Endothelial cell of umbilical vein (primary cell): ENCODE measurements at regions of chr1 and their contacts with region 1.

Region 1: DNA sequence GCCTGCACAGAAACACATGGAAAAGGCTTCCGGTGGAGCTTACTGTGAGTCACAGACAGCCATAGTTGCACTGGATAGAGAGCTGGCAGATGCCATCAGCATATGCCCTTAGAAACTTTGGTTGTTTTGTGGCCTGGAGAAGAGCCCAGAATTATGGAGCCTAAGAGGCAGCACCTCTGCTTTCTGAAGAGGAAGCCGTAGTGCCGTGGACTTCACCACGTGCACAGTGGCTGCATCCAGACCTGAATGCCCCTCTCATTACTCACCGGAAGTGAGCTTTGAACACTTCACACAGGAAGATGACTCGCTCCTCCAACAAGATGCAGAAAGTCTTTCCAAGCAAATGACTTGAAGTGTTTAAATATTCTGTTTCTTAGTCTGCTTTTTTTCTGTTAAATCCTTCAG is 28.4 kb downstream of the JUN start:
- DNase-seq: peak; percentile 99
- H3K4me3 ChIP-seq: peak overlapping the region in 1 of 3 experiments; percentile 18
- H3K27ac ChIP-seq: peak overlapping the region; percentile 96
- H3K4me1 ChIP-seq: peaks cover 40% of the 10 kb centered on the region
- H3K27me3 ChIP-seq: no peaks in the 10 kb centered on the region
- CTCF ChIP-seq: no peak
- POLR2A ChIP-seq: no peak

Region 2: DNA sequence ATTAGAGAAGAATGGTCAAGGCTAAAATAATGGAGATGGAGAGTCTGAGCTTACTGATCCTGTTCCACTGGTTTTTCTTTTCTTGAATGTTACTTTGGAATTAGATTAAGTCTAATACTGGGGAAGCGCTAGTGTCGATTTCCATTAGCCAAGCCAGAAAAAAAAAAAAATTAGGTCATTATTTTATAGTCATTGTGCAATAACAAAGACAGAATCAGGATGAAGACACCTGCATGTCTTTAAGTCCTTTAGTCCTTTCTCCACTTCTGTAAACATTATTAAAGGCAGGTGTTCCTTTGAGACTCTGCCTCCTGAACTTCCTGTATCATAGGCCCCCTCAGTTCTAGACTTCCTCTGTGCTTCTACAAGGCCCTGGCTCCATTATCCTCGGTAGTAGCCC is 98.4 kb before region 1 on chr1:
- CTCF ChIA-PET with region 1: no interaction called
- POLR2A ChIA-PET with region 1: no interaction called
- dilution Hi-C with region 1: no loop called
- intact Hi-C with region 1: no loop called
- DNase-seq: no peak
- H3K4me3 ChIP-seq: no peak overlapping the region
- H3K27ac ChIP-seq: no peak overlapping the region
- H3K4me1 ChIP-seq: no peaks in the 10 kb centered on the region
- H3K27me3 ChIP-seq: no peaks in the 10 kb centered on the region
- CTCF ChIP-seq: no peak
- POLR2A ChIP-seq: no peak

Region 3: DNA sequence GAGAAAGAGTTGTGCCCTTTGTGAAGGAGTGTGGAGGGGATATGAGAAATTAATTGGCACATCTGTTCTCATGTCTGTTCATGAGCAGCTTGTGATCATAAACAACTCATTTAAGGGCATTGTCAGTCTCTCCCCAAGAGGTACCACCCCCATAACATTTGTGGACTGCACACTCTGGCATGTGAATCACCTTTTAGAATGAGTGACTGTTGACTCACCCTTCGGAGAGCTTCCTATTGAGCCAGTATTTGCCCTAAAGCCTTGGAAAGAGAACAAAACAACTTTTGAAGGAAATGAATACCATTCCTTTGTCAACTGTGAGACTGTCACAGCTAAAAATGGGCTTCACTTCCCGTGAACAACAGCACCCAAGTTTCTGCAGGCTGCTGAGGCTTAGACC is 28.1 kb before region 1 on chr1:
- CTCF ChIA-PET with region 1: interaction called, 4 read pairs
- POLR2A ChIA-PET with region 1: interaction called, 3 read pairs
- dilution Hi-C with region 1: no loop called
- intact Hi-C with region 1: loop called (anchors 1 kb)
- DNase-seq: peak; percentile 97
- H3K4me3 ChIP-seq: no peak overlapping the region
- H3K27ac ChIP-seq: peak overlapping the region; percentile 88
- H3K4me1 ChIP-seq: peaks cover 19% of the 10 kb centered on the region
- H3K27me3 ChIP-seq: no peaks in the 10 kb centered on the region
- CTCF ChIP-seq: no peak
- POLR2A ChIP-seq: no peak

Region 4: DNA sequence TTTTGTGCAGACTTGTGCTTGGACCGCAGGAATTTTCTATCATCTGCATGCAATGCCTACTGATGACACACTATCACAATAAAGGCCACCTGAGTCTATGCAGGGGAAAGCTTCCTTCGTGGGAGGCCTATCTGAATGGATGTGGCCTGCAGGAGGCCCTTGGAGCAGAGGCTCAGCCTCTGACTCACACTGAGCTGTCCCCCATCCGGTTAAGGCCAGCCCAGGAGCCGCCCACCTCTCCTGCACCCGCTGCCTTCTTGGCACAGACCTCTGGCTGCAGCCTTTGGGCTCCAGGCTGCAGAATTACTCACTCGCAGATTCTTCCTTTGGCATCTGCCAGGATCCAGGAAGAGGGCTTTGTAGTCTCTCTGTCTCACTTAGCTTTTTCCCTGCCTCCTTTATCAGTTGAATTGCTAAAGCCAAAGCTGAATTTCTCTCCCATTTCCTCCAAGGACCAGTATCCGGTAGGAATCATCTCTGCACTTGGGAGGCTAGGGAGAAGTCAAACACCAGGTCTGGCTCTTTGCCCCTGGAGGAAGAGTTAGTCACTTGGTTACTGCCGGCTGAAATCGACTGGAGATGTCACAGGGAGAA is 93.4 kb after region 1 on chr1:
- CTCF ChIA-PET with region 1: no interaction called
- POLR2A ChIA-PET with region 1: no interaction called
- dilution Hi-C with region 1: no loop called
- intact Hi-C with region 1: loop called (anchors 1 kb)
- DNase-seq: peak; percentile 95
- H3K4me3 ChIP-seq: no peak overlapping the region
- H3K27ac ChIP-seq: peak overlapping the region; percentile 95
- H3K4me1 ChIP-seq: peaks cover 30% of the 10 kb centered on the region
- H3K27me3 ChIP-seq: no peaks in the 10 kb centered on the region
- CTCF ChIP-seq: peak; percentile 8 to 24
- POLR2A ChIP-seq: no peak